Mammary epithelial cell (primary cell): ENCODE measurements at regions of chr20 and their contacts with region 1.

Region 1: DNA sequence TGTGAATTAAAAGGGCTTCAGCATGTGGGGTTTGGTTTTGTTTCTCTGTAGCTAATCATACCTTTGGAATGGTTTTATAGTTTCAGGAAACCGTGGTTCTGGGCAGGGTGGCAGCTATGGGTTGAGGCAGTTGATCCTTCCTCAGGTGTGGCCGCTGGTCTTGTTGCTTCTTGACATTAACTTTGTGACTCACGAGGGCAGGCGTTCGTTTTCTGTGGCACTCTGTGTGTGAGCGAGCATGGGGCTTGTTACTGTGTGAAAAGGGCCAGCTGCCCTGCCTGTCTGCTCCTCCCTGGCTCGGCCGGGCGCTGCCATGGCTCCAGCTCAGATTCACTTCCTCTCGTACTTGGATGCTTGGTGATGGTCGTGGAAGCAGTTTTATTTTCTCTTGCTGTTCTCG is 16.2 kb downstream of the DNAJC5 start:
- DNase-seq: peak; percentile 99
- H3K4me3 ChIP-seq: peak overlapping the region in 2 of 3 experiments; percentile 15 to 27
- H3K27ac ChIP-seq: peak overlapping the region; percentile 70
- H3K4me1 ChIP-seq: peaks cover 35% of the 10 kb centered on the region
- H3K27me3 ChIP-seq: no peaks in the 10 kb centered on the region
- CTCF ChIP-seq: no peak

Region 2: GRCh38 chr20:63894358-63895201 is 16.6 kb before region 1 on chr20 and contains the start of gene DNAJC5:
- CTCF ChIA-PET with region 1: no interaction called
- dilution Hi-C with region 1: no loop called
- in situ Hi-C with region 1: no loop called
- intact Hi-C with region 1: loop called (anchors 2 kb)
- DNase-seq: peak; percentile 87
- H3K4me3 ChIP-seq: peak within 1 kb of the TSS; percentile 65 to 97 (median 85)
- H3K27ac ChIP-seq: peak within 1 kb of the TSS; percentile 73
- H3K4me1 ChIP-seq: peaks cover 25% of the 10 kb centered on the region
- H3K27me3 ChIP-seq: no peaks in the 10 kb centered on the region
- CTCF ChIP-seq: no peak
- total RNA-seq, gene DNAJC5: 77.0 to 78.7 TPM

Region 3: DNA sequence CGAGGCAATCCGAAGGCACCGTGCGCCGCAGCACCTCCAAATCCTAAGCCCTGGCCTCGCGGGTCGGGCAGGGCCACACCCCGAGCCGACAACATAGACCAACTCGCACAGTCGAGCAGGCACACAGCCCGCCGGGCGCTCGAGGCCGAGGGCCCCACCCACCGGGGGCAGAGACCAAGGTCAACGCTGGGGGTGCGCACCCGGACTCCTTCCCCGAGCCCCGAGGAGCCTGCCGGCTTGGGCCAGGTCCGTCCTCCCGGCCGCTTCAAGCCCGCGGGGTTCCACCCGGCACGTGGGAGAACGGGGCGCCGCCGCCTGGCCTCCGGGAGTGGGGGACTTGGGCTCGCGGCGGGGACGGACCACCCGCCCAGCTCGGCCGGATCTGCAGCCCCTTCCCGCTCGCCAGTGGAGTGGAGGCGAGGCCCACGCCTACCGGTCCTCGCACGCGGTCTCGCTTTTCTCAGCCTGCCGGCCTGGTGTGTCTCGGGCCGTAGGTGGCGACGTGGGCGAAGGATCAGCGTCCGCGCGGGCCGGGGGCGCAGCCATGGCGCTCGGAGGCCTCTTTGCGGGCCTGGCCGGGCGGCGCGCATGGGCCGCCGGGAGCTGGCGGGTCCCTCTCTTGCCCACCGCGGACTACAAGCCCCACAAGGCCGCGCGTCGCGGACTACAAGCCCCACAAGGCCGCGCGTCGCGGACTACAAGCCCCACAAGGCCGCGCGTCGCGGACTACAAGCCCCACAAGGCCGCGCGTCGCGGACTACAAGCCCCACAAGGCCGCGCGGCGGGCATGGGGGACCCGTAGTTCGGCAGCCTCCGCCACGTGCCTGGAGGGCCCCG is 44.9 kb after region 1 on chr20 and contains the start of gene UCKL1:
- CTCF ChIA-PET with region 1: no interaction called
- dilution Hi-C with region 1: no loop called
- in situ Hi-C with region 1: no loop called
- intact Hi-C with region 1: loop called (anchors 1 kb)
- DNase-seq: peak; percentile 78
- H3K4me3 ChIP-seq: peak within 1 kb of the TSS; percentile 80 to 92 (median 88)
- H3K27ac ChIP-seq: peak within 1 kb of the TSS; percentile 55
- H3K4me1 ChIP-seq: peaks cover 39% of the 10 kb centered on the region
- H3K27me3 ChIP-seq: no peaks in the 10 kb centered on the region
- CTCF ChIP-seq: no peak
- total RNA-seq, gene UCKL1: 28.5 to 34.3 TPM